Mammary epithelial cell (primary cell): ENCODE measurements at regions of chr1 and their contacts with region 1.

Region 1: DNA sequence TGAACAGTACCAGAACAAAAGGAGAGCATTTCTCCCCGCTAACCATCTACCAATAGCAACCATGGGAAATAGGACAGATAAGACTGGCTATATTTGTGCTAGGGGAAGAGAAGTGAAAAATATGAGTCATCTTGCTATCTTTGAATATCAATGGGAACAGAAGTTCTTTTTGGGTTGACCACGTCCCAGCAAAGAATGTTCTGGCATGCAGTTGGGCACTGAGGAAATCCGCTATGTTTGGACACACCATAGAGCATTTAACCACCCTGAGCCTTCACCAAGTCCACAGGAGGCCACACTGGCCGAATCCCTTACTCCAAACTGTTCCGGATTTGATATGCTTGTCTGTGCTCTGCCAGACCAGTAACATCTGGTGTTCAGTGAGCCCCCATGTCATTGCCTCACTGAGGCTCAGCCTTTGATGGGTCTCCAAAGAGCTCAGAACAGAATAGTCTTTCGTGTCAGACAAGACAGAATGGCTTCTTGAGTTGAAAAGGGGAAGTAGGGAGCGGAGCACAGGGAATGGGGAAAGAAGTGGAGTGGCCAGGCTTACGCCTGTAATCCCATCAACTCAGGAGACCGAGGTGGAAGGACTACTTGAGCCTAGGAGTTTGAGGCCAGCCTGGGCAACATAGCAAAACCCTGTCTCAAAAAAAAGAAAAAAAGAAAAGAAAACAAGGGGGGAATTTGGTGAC is 81.4 kb downstream of the SMYD2 start:
- DNase-seq: no peak
- H3K4me3 ChIP-seq: no peak overlapping the region
- H3K27ac ChIP-seq: no peak overlapping the region
- H3K4me1 ChIP-seq: peaks cover 5% of the 10 kb centered on the region
- H3K27me3 ChIP-seq: no peaks in the 10 kb centered on the region
- CTCF ChIP-seq: no peak

Region 2: GRCh38 chr1:214542275-214543199 is 180.2 kb after region 1 on chr1:
- CTCF ChIA-PET with region 1: no interaction called
- dilution Hi-C with region 1: loop called (anchors 5 kb)
- in situ Hi-C with region 1: no loop called
- intact Hi-C with region 1: no loop called
- DNase-seq: no peak
- H3K4me3 ChIP-seq: no peak overlapping the region
- H3K27ac ChIP-seq: no peak overlapping the region
- H3K4me1 ChIP-seq: peaks cover 48% of the 10 kb centered on the region
- H3K27me3 ChIP-seq: no peaks in the 10 kb centered on the region
- CTCF ChIP-seq: no peak

Region 3: DNA sequence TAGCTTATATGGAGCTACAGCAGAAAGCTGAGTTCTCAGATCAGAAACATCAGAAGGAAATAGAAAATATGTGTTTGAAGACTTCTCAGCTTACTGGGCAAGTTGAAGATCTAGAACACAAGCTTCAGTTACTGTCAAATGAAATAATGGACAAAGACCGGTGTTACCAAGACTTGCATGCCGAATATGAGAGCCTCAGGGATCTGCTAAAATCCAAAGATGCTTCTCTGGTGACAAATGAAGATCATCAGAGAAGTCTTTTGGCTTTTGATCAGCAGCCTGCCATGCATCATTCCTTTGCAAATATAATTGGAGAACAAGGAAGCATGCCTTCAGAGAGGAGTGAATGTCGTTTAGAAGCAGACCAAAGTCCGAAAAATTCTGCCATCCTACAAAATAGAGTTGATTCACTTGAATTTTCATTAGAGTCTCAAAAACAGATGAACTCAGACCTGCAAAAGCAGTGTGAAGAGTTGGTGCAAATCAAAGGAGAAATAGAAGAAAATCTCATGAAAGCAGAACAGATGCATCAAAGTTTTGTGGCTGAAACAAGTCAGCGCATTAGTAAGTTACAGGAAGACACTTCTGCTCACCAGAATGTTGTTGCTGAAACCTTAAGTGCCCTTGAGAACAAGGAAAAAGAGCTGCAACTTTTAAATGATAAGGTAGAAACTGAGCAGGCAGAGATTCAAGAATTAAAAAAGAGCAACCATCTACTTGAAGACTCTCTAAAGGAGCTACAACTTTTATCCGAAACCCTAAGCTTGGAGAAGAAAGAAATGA is 278.3 kb after region 1 on chr1:
- CTCF ChIA-PET with region 1: no interaction called
- dilution Hi-C with region 1: no loop called
- in situ Hi-C with region 1: no loop called
- intact Hi-C with region 1: no loop called
- DNase-seq: no peak
- H3K4me3 ChIP-seq: no peak overlapping the region
- H3K27ac ChIP-seq: no peak overlapping the region
- H3K4me1 ChIP-seq: peaks cover 5% of the 10 kb centered on the region
- H3K27me3 ChIP-seq: no peaks in the 10 kb centered on the region
- CTCF ChIP-seq: no peak